ENCODE measurements at regions of chr6 and their contacts with region 1.

Region 1: DNA sequence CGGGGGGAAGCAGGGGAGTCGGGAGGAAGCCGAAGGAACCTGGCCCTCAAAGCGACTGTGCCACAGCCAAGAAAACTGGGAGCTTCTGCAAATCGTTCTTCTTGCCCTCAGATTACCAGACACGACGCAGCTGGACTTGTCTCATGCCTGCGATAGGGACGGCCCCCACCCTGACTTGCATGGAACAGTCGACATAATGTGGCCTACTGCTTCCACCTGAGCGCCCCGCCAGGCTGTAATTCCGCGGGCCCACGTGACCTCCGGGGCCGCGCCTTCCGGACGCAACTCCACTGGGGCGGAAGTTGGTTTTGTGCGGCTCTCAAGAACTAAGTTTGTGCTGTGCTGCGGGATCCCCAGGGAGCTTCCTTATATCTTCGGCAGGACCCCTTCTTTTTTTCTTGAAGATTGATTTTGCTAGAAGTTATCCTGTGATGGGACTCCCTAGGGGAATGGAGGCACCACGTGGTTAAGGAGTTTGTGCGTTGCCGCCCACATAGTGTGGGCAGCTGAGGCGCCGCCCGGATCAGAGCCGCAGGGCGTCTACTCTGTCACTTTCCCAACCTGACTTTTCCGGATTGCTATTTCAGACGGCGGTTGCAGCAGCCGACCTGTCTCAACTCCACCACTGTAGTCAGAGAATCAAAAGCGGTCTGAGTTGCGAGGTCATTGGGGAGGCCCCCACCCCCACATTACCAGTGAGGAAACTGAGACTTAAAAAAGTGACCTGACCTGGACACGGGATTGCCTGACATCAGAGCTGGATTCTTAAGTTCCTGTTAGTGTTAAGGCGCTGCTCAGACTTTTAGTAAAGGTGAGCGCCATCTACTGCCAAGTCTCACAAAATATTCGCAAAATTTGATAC is 540 bp upstream of the CD164 start:
- DNase-seq: peak; percentile 94 to 97 (median 95)
- ATAC-seq: peak; percentile 92 to 95 (median 93)
- H3K4me3 ChIP-seq: peak overlapping the region; percentile 70 to 99 (median 96)
- H3K27ac ChIP-seq: peak overlapping the region; percentile 97 to 100 (median 99)
- H3K4me1 ChIP-seq: peaks cover 0 to 44% (median 25%) of the 10 kb centered on the region in 12 donors
- H3K27me3 ChIP-seq: no peaks in the 10 kb centered on the region
- CTCF ChIP-seq: peak; percentile 34 to 74 (median 60)
- POLR2A ChIP-seq: no peak

Region 2: GRCh38 chr6:108848116-108848868 is 534.5 kb before region 1 on chr6 and contains the start of gene ARMC2:
- intact Hi-C with region 1: loop called in 1 of 10 experiments (anchors 5 kb)
- DNase-seq: peak; percentile 94 to 99 (median 96)
- ATAC-seq: peak; percentile 95 to 98 (median 96)
- H3K4me3 ChIP-seq: peak within 1 kb of the TSS; percentile 59 to 92 (median 76)
- H3K27ac ChIP-seq: peak within 1 kb of the TSS; percentile 66 to 94 (median 88)
- H3K4me1 ChIP-seq: peaks cover 0 to 58% (median 29%) of the 10 kb centered on the region in 12 donors
- H3K27me3 ChIP-seq: no peaks in the 10 kb centered on the region
- CTCF ChIP-seq: peak in 2 of 12 donors; percentile 10 to 14
- POLR2A ChIP-seq: peak; percentile 66
- total RNA-seq, gene ARMC2: 5.7 to 18.0 (median 10.2) TPM

Region 3: DNA sequence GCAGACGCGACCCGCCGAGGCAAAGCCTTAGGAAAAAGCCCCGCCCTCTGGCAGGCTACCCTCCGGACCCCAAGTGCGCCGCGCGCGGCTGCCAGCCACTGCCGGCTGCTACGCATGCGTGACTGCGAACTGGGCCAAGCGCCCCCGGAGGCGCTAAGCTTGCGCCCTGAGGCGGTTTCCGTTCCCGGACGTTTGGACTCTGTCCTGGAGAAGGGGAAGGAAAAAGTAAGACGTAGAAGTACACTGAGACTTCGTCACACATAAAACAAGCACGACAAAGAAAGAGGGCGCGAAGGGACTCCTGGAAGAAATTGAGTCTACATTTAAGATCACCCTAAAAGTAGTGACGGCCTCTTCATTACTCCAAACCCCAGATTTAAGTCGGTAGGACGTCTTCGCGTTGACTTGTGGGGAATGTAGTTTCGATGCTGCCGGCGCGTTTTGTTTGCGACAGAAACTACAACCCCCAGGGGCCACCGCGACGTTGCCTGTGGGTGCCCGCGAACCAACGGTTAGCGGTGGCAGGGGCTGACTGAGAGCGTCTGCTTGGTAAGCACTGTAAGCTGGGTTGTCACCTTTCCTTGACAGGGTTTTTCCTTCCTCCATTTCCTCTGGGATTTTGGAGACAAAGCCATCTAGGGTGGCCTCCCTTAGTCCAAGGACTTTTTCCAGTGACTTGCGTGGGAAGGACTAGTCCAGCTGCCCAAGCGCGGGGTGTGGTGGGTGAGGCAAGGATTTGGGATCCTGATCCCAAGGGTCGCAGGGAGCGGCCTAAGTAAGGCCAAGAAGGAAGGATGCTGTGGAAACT is 287.6 kb before region 1 on chr6 and contains the start of gene CEP57L1:
- intact Hi-C with region 1: loop called in 8 of 10 experiments (anchors 1 to 10 kb)
- DNase-seq: peak; percentile 98 to 99 (median 99)
- ATAC-seq: peak; percentile 77 to 90 (median 84)
- H3K4me3 ChIP-seq: peak within 1 kb of the TSS; percentile 51 to 88 (median 66)
- H3K27ac ChIP-seq: peak within 1 kb of the TSS; percentile 95 to 100 (median 98)
- H3K4me1 ChIP-seq: peaks cover 0 to 45% (median 22%) of the 10 kb centered on the region in 12 donors
- H3K27me3 ChIP-seq: no peaks in the 10 kb centered on the region
- CTCF ChIP-seq: peak in 2 of 12 donors; percentile 8 to 33
- POLR2A ChIP-seq: peak; percentile 7 to 26
- total RNA-seq, gene CEP57L1: 5.9 to 13.8 (median 10.3) TPM

Region 4: GRCh38 chr6:109236115-109237076 is 146.4 kb before region 1 on chr6:
- intact Hi-C with region 1: loop called in 2 of 10 experiments (anchors 5 kb)
- DNase-seq: peak in 1 of 5 donors; percentile 35
- ATAC-seq: peak in 3 of 4 donors; percentile 56 to 59 (median 57)
- H3K4me3 ChIP-seq: no peak overlapping the region
- H3K27ac ChIP-seq: peak overlapping the region in 1 of 12 donors; percentile 51
- H3K4me1 ChIP-seq: peaks cover 0 to 57% (median 20%) of the 10 kb centered on the region in 12 donors
- H3K27me3 ChIP-seq: no peaks in the 10 kb centered on the region
- CTCF ChIP-seq: peak in 3 of 12 donors; percentile 8 to 22 (median 10)
- POLR2A ChIP-seq: no peak

Region 5: GRCh38 chr6:109311471-109311870 is 71.3 kb before region 1 on chr6:
- intact Hi-C with region 1: loop called in 1 of 10 experiments (anchors 5 kb)
- DNase-seq: no peak
- ATAC-seq: no peak
- H3K4me3 ChIP-seq: no peak overlapping the region
- H3K27ac ChIP-seq: no peak overlapping the region
- H3K4me1 ChIP-seq: peaks cover 0 to 8% (median 0%) of the 10 kb centered on the region in 12 donors
- H3K27me3 ChIP-seq: no peaks in the 10 kb centered on the region
- CTCF ChIP-seq: no peak
- POLR2A ChIP-seq: no peak

Region 6: GRCh38 chr6:109336221-109336961 is 46.4 kb before region 1 on chr6:
- intact Hi-C with region 1: no loop called
- DNase-seq: peak in 1 of 5 donors; percentile 40
- ATAC-seq: peak in 3 of 4 donors; percentile 76 to 79 (median 77)
- H3K4me3 ChIP-seq: no peak overlapping the region
- H3K27ac ChIP-seq: no peak overlapping the region
- H3K4me1 ChIP-seq: peaks cover 0 to 18% (median 0%) of the 10 kb centered on the region in 12 donors
- H3K27me3 ChIP-seq: no peaks in the 10 kb centered on the region
- CTCF ChIP-seq: no peak
- POLR2A ChIP-seq: no peak

Region 7: GRCh38 chr6:109455502-109456282 is 72.9 kb after region 1 on chr6 and contains the start of gene MICAL1:
- intact Hi-C with region 1: loop called in 5 of 10 experiments (anchors 5 to 10 kb)
- DNase-seq: peak; percentile 63 to 86 (median 77)
- ATAC-seq: peak; percentile 61 to 83 (median 72)
- H3K4me3 ChIP-seq: peak within 1 kb of the TSS; percentile 57 to 93 (median 76)
- H3K27ac ChIP-seq: peak within 1 kb of the TSS; percentile 35 to 94 (median 74)
- H3K4me1 ChIP-seq: peaks cover 0 to 53% (median 26%) of the 10 kb centered on the region in 12 donors
- H3K27me3 ChIP-seq: no peaks in the 10 kb centered on the region
- CTCF ChIP-seq: peak in 9 of 12 donors; percentile 14 to 53 (median 36)
- POLR2A ChIP-seq: peak in 1 of 2 donors; percentile 37
- total RNA-seq, gene MICAL1: 4.5 to 21.9 (median 5.5) TPM

Region 8: GRCh38 chr6:109690737-109691621 is 308.2 kb after region 1 on chr6 and contains the starts of genes AK9 and FIG4:
- intact Hi-C with region 1: loop called in 1 of 10 experiments (anchors 5 kb)
- DNase-seq: peak; percentile 92 to 95 (median 94)
- ATAC-seq: peak; percentile 99
- H3K4me3 ChIP-seq: peak within 1 kb of the TSS; percentile 57 to 97 (median 80)
- H3K27ac ChIP-seq: peak within 1 kb of the TSS; percentile 64 to 95 (median 82)
- H3K4me1 ChIP-seq: peaks cover 0 to 34% (median 15%) of the 10 kb centered on the region in 12 donors
- H3K27me3 ChIP-seq: no peaks in the 10 kb centered on the region
- CTCF ChIP-seq: peak in 6 of 12 donors; percentile 12 to 42 (median 21)
- POLR2A ChIP-seq: peak in 1 of 2 donors; percentile 64
- total RNA-seq, gene AK9: 7.7 to 17.0 (median 10.6) TPM
- total RNA-seq, gene FIG4: 6.9 to 17.2 (median 10.4) TPM